Activated T-helper 1 cell treated with anti-CD3 and anti-CD28 coated beads, Interleukin-12 subunit alpha, Interleukin-12 subunit beta, Interleukin-2, Interleukin-4 antibody, amounts not matched to agents 30 ng/mL and 10 ng/mL and 1 ng/mL, durations not matched to agents 14 hours and 24 hours and 36 hours (primary cell): ENCODE measurements at regions of chr1 and their contacts with region 1.

Region 1: DNA sequence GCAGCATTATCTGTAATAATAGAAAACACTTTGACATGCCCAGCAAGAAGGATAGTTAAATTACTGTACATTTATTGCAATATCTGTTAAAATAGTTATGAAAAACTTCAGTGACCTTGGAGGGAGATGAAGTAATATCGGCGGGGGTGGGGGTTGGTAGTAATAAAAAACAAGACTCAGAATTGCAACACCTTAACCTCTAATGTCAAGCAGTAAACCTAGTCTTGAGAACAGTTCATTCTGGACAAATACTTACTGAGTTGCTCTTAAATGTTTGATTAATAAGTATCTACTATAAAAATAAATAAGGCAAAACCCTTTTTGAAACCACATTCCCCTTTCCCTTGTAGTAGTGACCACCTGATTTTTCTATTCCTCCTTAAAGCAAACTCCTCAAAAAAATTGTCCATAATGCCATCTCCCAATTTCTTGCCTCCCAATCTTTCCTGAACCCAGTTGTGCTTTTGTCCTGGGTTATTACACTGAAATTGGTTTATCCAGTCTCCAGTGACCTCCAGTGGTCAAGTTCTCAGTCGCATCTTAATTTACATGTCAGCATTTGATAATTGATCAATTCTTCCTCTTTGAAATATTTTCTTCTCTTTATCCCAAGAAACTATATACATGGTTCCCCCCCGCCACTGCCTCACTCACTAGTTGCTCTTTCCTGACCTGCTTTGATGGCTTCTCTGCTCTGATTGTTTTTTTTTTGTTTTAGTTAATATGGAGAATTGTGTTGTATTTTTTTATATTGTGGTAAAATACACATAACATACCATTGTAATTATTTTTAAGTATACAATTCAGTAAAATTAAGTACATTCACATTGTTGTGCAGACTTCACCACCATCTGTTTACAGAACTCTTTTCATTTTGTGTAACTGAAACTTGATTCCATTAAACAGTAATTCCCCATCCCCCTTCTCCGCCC is 36.8 kb downstream of the RAP1A start:
- DNase-seq: no peak
- H3K4me3 Mint-ChIP-seq: no peak overlapping the region
- H3K27ac Mint-ChIP-seq: peak overlapping the region; percentile 5
- H3K4me1 Mint-ChIP-seq: peaks cover 43% of the 10 kb centered on the region
- H3K27me3 Mint-ChIP-seq: no peaks in the 10 kb centered on the region

Region 2: GRCh38 chr1:111639602-111640198 is 16.7 kb before region 1 on chr1:
- intact Hi-C with region 1: loop called (anchors 2 kb)
- DNase-seq: no peak
- H3K4me3 Mint-ChIP-seq: no peak overlapping the region
- H3K27ac Mint-ChIP-seq: no peak overlapping the region
- H3K4me1 Mint-ChIP-seq: peaks cover 55% of the 10 kb centered on the region
- H3K27me3 Mint-ChIP-seq: no peaks in the 10 kb centered on the region

Region 3: DNA sequence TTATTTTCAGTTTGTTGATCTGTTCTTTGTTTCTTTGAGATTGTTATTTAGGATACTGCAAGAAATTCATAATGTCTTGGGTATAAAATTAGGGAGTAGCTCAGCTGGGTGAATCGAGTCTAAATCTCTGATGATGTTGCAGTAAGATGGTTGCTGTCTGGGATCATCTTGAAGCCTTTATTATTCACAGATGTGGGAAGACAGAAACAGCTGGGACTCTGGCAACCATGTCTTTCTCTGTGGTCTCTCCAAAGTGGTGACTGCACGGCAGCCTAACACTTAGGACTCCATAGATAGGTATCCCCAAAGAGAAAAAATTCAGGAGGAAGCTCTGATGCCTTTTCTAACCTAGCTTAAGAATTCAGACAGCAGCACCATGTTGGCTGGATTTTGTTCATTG is 16.0 kb after region 1 on chr1:
- intact Hi-C with region 1: loop called (anchors 2 kb)
- DNase-seq: no peak
- H3K4me3 Mint-ChIP-seq: no peak overlapping the region
- H3K27ac Mint-ChIP-seq: no peak overlapping the region
- H3K4me1 Mint-ChIP-seq: peaks cover 57% of the 10 kb centered on the region
- H3K27me3 Mint-ChIP-seq: no peaks in the 10 kb centered on the region

Region 4: GRCh38 chr1:111704776-111705175 is 48.4 kb after region 1 on chr1:
- intact Hi-C with region 1: loop called (anchors 2 kb)
- DNase-seq: no peak
- H3K4me3 Mint-ChIP-seq: no peak overlapping the region
- H3K27ac Mint-ChIP-seq: peak overlapping the region; percentile 32
- H3K4me1 Mint-ChIP-seq: peaks cover 36% of the 10 kb centered on the region
- H3K27me3 Mint-ChIP-seq: no peaks in the 10 kb centered on the region